ENCODE measurements at regions of chr1 and their contacts with region 1.

Region 1: GRCh38 chr1:231357831-231358354 is 19.8 kb downstream of the SPRTN start:
- DNase-seq: peak; percentile 37
- H3K4me3 ChIP-seq: no peak overlapping the region
- CTCF ChIP-seq: peak; percentile 53

Region 2: GRCh38 chr1:231369282-231369681 is 11.4 kb after region 1 on chr1:
- CTCF ChIA-PET with region 1: interaction called, 24 read pairs
- POLR2A ChIA-PET with region 1: no interaction called
- DNase-seq: no peak
- H3K4me3 ChIP-seq: no peak overlapping the region
- CTCF ChIP-seq: no peak

Region 3: DNA sequence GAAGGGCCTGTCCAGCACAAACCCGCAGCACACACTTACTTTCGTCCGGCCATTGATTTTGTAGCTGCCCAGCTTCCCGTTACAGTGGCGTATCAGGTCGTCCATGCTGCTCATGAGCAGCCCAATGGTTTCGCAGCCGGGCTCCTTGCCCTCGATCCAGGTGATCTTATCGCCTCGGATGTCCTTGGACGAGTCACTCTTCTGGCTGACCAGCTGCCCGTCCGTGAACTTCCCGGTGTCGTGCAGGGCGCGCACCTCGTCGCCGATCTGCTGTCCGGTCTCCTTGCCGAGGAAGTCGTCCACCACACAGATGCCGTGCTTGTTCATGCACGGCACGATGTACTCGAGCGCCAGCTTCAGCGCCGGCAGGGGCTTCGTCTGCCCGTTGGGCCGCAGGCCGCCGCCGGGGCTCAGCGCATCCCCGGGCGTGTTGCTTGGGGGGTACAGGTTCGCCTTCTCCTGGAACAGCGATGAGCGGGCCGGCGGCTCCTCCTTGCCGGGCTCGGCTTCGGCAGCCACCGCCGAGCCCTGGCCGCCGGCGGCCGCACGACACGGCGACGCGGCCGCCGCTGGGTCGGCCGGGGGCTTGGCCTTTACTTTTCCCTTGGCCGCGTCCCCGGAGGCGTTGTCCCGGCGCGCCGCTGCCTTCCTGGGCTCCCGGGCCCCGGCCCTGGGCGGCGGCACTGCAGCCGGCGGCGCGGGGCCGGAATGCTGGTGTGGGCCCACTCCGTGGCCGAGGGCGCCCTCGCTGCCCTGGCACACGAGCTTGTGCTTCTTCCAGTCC is 63.3 kb after region 1 on chr1:
- CTCF ChIA-PET with region 1: interaction called, 16 read pairs
- POLR2A ChIA-PET with region 1: interaction called, 3 read pairs
- DNase-seq: no peak
- H3K4me3 ChIP-seq: peak overlapping the region; percentile 86
- CTCF ChIP-seq: no peak

Region 4: GRCh38 chr1:231584124-231584523 is 226.2 kb after region 1 on chr1:
- CTCF ChIA-PET with region 1: interaction called, 149 read pairs
- POLR2A ChIA-PET with region 1: no interaction called
- DNase-seq: peak; percentile 60
- H3K4me3 ChIP-seq: no peak overlapping the region
- CTCF ChIP-seq: peak; percentile 2

Region 5: DNA sequence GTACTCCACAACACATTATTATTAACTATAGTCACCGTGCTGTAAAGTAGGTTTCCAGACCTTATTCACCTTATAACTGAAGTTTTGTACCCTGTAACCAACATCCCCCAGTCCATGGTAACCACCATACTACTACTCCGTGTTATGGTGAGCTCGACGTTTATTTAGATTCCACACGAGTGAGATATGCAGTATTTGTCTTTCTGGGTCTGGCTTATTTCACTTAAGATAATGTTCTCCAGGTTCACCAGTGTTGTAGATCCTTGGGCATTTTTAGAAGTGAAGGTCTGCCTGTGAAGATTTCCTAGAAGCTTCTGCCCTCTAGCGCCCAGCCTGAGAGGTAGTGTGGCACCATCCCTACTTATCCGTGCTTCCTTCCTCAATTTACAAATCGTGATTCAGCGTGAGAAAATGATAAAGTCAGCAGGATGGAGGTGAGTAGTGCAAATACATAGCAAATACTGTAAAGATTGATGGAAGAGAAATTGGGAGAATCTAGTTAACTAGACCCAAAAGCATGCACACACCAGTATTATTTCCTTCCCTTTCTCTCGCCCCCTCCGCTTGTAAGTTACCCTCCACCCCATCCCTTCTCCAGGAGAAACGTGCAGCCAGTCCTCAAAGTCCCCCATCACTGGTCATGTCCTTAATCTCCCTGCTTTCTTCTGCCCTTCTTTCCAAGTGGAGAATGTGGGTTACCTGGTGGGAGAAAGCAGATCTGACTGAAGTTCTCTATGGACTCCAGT is 232.7 kb after region 1 on chr1:
- CTCF ChIA-PET with region 1: interaction called, 149 read pairs
- POLR2A ChIA-PET with region 1: interaction called, 3 read pairs
- DNase-seq: peak; percentile 26
- H3K4me3 ChIP-seq: no peak overlapping the region
- CTCF ChIP-seq: peak; percentile 76

Region 6: GRCh38 chr1:231596337-231596791 is 238.5 kb after region 1 on chr1:
- CTCF ChIA-PET with region 1: interaction called, 149 read pairs
- POLR2A ChIA-PET with region 1: interaction called, 3 read pairs
- DNase-seq: no peak
- H3K4me3 ChIP-seq: no peak overlapping the region
- CTCF ChIP-seq: no peak

Region 7: GRCh38 chr1:231603598-231604275 is 245.8 kb after region 1 on chr1:
- CTCF ChIA-PET with region 1: interaction called, 87 read pairs
- POLR2A ChIA-PET with region 1: interaction called, 3 read pairs
- DNase-seq: no peak
- H3K4me3 ChIP-seq: peak overlapping the region; percentile 60
- CTCF ChIP-seq: peak; percentile 42

Measured in AG04449 (cell line).